CD8-positive, alpha-beta T cell (primary cell): ENCODE measurements at regions of chr2 and their contacts with region 1.

Region 1: GRCh38 chr2:241508240-241509154 is at the start of gene STK25:
- DNase-seq: peak; percentile 94 to 98 (median 97)
- ATAC-seq: peak; percentile 93
- H3K4me3 ChIP-seq: peak within 1 kb of the TSS; percentile 71 to 72
- H3K4me3 Mint-ChIP-seq: peak within 1 kb of the TSS; percentile 81
- H3K27ac ChIP-seq: peak within 1 kb of the TSS; percentile 78 to 81
- H3K27ac Mint-ChIP-seq: peak within 1 kb of the TSS; percentile 85
- H3K4me1 ChIP-seq: peaks cover 21% of the 10 kb centered on the region
- H3K4me1 Mint-ChIP-seq: peaks cover 24% of the 10 kb centered on the region
- H3K27me3 ChIP-seq: no peaks in the 10 kb centered on the region
- H3K27me3 Mint-ChIP-seq: no peaks in the 10 kb centered on the region
- CTCF ChIP-seq: no peak
- total RNA-seq, gene STK25: 58.7 to 66.4 TPM

Region 2: DNA sequence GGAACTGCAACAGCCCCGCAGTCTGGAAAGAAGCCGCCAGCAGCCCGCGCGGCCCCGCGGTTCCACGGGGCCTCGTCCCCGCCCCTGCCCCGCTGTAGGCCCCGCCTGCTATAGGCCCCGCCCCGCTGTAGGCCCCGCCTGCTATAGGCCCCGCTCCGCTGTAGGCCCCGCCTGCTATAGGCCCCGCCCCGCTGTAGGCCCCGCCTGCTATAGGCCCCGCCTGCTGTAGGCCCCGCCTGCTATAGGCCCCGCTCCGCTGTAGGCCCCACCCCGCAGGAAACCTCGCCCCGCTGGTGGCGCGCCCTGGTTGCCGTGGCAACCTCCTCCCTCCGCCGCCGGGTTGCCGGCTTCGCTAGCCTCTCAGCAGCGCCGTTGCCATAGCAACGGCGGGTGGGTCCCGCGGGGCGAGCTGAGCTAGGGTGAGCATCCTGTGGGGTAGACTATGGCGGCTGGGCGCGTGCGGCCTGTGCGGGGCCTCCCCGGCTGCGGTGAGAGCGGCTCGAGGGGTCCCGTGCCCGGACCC is 676.2 kb before region 1 on chr2:
- CTCF ChIA-PET with region 1: no interaction called
- POLR2A ChIA-PET with region 1: no interaction called
- intact Hi-C with region 1: loop called in 1 of 2 experiments (anchors 1 kb)
- DNase-seq: peak; percentile 96 to 99 (median 99)
- ATAC-seq: peak; percentile 93
- H3K4me3 ChIP-seq: peak overlapping the region; percentile 49 to 64
- H3K4me3 Mint-ChIP-seq: no peak overlapping the region
- H3K27ac ChIP-seq: peak overlapping the region in 1 of 2 experiments; percentile 19
- H3K27ac Mint-ChIP-seq: no peak overlapping the region
- H3K4me1 ChIP-seq: peaks cover 11% of the 10 kb centered on the region
- H3K4me1 Mint-ChIP-seq: peaks cover 6% of the 10 kb centered on the region
- H3K27me3 ChIP-seq: peaks cover 4 to 9% of the 10 kb centered on the region in 2 experiments
- H3K27me3 Mint-ChIP-seq: peaks cover 12% of the 10 kb centered on the region
- CTCF ChIP-seq: no peak

Region 3: GRCh38 chr2:240998120-240998994 is 510.1 kb before region 1 on chr2 and contains the start of gene SNED1:
- CTCF ChIA-PET with region 1: no interaction called
- POLR2A ChIA-PET with region 1: no interaction called
- intact Hi-C with region 1: no loop called
- DNase-seq: peak in 8 of 9 experiments; percentile 57 to 85 (median 75)
- ATAC-seq: peak; percentile 68
- H3K4me3 ChIP-seq: peak within 1 kb of the TSS; percentile 47 to 57
- H3K4me3 Mint-ChIP-seq: peak within 1 kb of the TSS; percentile 74
- H3K27ac ChIP-seq: peak within 1 kb of the TSS; percentile 36 to 63
- H3K27ac Mint-ChIP-seq: peak within 1 kb of the TSS; percentile 76
- H3K4me1 ChIP-seq: peaks cover 24% of the 10 kb centered on the region
- H3K4me1 Mint-ChIP-seq: peaks cover 21% of the 10 kb centered on the region
- H3K27me3 ChIP-seq: peaks cover 0 to 3% of the 10 kb centered on the region in 2 experiments
- H3K27me3 Mint-ChIP-seq: peaks cover 15% of the 10 kb centered on the region
- CTCF ChIP-seq: no peak
- total RNA-seq, gene SNED1: 32.4 to 38.4 TPM

Region 4: GRCh38 chr2:241237949-241238371 is 270.5 kb before region 1 on chr2:
- CTCF ChIA-PET with region 1: no interaction called
- POLR2A ChIA-PET with region 1: no interaction called
- intact Hi-C with region 1: no loop called
- DNase-seq: no peak
- ATAC-seq: no peak
- H3K4me3 ChIP-seq: no peak overlapping the region
- H3K4me3 Mint-ChIP-seq: no peak overlapping the region
- H3K27ac ChIP-seq: no peak overlapping the region
- H3K27ac Mint-ChIP-seq: no peak overlapping the region
- H3K4me1 ChIP-seq: no peaks in the 10 kb centered on the region
- H3K4me1 Mint-ChIP-seq: no peaks in the 10 kb centered on the region
- H3K27me3 ChIP-seq: no peaks in the 10 kb centered on the region
- H3K27me3 Mint-ChIP-seq: no peaks in the 10 kb centered on the region
- CTCF ChIP-seq: no peak

Region 5: DNA sequence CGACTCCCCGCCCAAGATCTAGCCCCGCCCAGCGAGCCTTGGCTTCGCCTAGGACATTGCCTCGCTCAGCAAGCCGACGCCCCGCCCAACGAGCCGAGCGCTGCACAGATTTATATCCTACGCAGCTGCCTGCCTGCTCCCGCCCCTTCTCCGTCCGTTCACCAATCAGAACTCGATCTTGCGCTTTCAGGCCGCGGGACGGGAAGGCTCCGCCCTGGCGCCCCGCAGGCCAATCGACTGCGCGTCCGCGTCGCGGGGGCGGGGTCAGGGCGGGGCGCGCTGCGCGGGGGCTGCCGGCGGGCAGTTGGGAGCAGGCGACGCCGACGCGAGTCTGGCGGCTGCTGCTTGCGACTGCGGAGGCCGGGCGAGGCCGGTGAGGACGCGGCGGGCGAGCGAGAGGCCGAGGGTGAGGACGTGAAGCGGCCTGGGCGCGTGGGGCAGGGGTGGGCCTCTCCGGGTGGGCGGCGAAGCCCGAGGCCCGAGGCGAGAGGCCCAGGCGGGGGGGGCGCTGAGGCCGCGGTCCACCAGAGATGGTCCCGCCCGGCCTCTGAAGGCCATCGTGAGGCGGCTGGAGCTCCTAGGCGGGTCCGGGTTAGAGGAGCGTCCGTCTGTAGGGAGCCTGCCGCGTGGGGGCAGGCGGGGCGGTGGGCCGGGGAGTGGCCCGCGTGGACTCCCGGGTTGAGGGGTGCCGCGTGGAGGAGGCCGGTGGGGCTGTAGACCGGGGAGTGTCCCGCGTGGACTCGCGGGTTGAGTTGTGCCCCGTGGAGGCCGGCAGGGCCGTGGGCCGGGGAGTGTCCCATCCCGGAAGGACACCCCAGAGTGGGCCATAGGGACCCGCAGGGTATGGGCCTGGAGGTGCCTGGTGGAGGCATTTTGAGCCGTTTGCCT is 152.3 kb before region 1 on chr2 and contains the start of gene FARP2:
- CTCF ChIA-PET with region 1: no interaction called
- POLR2A ChIA-PET with region 1: no interaction called
- intact Hi-C with region 1: loop called in 1 of 2 experiments (anchors 2 kb)
- DNase-seq: peak; percentile 94 to 99 (median 97)
- ATAC-seq: peak; percentile 94
- H3K4me3 ChIP-seq: peak within 1 kb of the TSS; percentile 55 to 58
- H3K4me3 Mint-ChIP-seq: peak within 1 kb of the TSS; percentile 86
- H3K27ac ChIP-seq: peak within 1 kb of the TSS; percentile 23 to 52
- H3K27ac Mint-ChIP-seq: peak within 1 kb of the TSS; percentile 87
- H3K4me1 ChIP-seq: peaks cover 10% of the 10 kb centered on the region
- H3K4me1 Mint-ChIP-seq: peaks cover 21% of the 10 kb centered on the region
- H3K27me3 ChIP-seq: no peaks in the 10 kb centered on the region
- H3K27me3 Mint-ChIP-seq: no peaks in the 10 kb centered on the region
- CTCF ChIP-seq: no peak
- total RNA-seq, gene FARP2: 20.6 to 22.5 TPM

Region 6: GRCh38 chr2:241609859-241610793 is 101.6 kb after region 1 on chr2:
- CTCF ChIA-PET with region 1: no interaction called
- POLR2A ChIA-PET with region 1: no interaction called
- intact Hi-C with region 1: loop called (anchors 1 kb)
- DNase-seq: peak; percentile 81 to 96 (median 92)
- ATAC-seq: peak; percentile 99
- H3K4me3 ChIP-seq: peak overlapping the region; percentile 53 to 59
- H3K4me3 Mint-ChIP-seq: peak overlapping the region; percentile 63
- H3K27ac ChIP-seq: peak overlapping the region; percentile 51 to 77
- H3K27ac Mint-ChIP-seq: peak overlapping the region; percentile 72
- H3K4me1 ChIP-seq: peaks cover 23% of the 10 kb centered on the region
- H3K4me1 Mint-ChIP-seq: peaks cover 26% of the 10 kb centered on the region
- H3K27me3 ChIP-seq: no peaks in the 10 kb centered on the region
- H3K27me3 Mint-ChIP-seq: no peaks in the 10 kb centered on the region
- CTCF ChIP-seq: peak; percentile 63

Region 7: GRCh38 chr2:241686649-241687425 is 178.3 kb after region 1 on chr2 and contains the start of gene DTYMK:
- CTCF ChIA-PET with region 1: no interaction called
- POLR2A ChIA-PET with region 1: no interaction called
- intact Hi-C with region 1: loop called (anchors 1 kb)
- DNase-seq: peak; percentile 89 to 98 (median 95)
- ATAC-seq: peak; percentile 95
- H3K4me3 ChIP-seq: peak within 1 kb of the TSS; percentile 87 to 98
- H3K4me3 Mint-ChIP-seq: peak within 1 kb of the TSS; percentile 90
- H3K27ac ChIP-seq: peak within 1 kb of the TSS; percentile 74 to 81
- H3K27ac Mint-ChIP-seq: peak within 1 kb of the TSS; percentile 91
- H3K4me1 ChIP-seq: peaks cover 21% of the 10 kb centered on the region
- H3K4me1 Mint-ChIP-seq: peaks cover 24% of the 10 kb centered on the region
- H3K27me3 ChIP-seq: no peaks in the 10 kb centered on the region
- H3K27me3 Mint-ChIP-seq: no peaks in the 10 kb centered on the region
- CTCF ChIP-seq: no peak
- total RNA-seq, gene DTYMK: 3.7 to 6.0 TPM